ENCODE measurements at regions of chr9 and their contacts with region 1.

Region 1: GRCh38 chr9:133356391-133357091 is at the starts of genes SURF1 and SURF2:
- DNase-seq: peak; percentile 77 to 92 (median 87)
- ATAC-seq: peak; percentile 96
- H3K4me3 ChIP-seq: peak within 1 kb of the TSS; percentile 64
- H3K4me3 Mint-ChIP-seq: peak within 1 kb of the TSS; percentile 80 to 94 (median 89)
- H3K27ac ChIP-seq: peak within 1 kb of the TSS; percentile 91
- H3K27ac Mint-ChIP-seq: peak within 1 kb of the TSS; percentile 72 to 91 (median 84)
- H3K4me1 ChIP-seq: peaks cover 12 to 28% of the 10 kb centered on the region in 2 donors
- H3K4me1 Mint-ChIP-seq: peaks cover 20 to 42% (median 28%) of the 10 kb centered on the region in 7 donors
- H3K27me3 ChIP-seq: no peaks in the 10 kb centered on the region
- H3K27me3 Mint-ChIP-seq: no peaks in the 10 kb centered on the region
- total RNA-seq, gene SURF1: 40.5 to 53.5 (median 47.9) TPM
- total RNA-seq, gene SURF2: 15.0 to 23.5 (median 15.6) TPM

Region 2: GRCh38 chr9:133335878-133336811 is 20.4 kb before region 1 on chr9 and contains the start of gene SURF6:
- CTCF ChIA-PET with region 1: no interaction called
- POLR2A ChIA-PET with region 1: interaction called, 10 read pairs
- intact Hi-C with region 1: loop called (anchors 1 kb)
- DNase-seq: peak; percentile 90 to 96 (median 93)
- ATAC-seq: peak; percentile 98
- H3K4me3 ChIP-seq: peak within 1 kb of the TSS; percentile 92
- H3K4me3 Mint-ChIP-seq: peak within 1 kb of the TSS; percentile 93 to 98 (median 96)
- H3K27ac ChIP-seq: peak within 1 kb of the TSS; percentile 82
- H3K27ac Mint-ChIP-seq: peak within 1 kb of the TSS; percentile 90 to 96 (median 94)
- H3K4me1 ChIP-seq: peaks cover 21 to 31% of the 10 kb centered on the region in 2 donors
- H3K4me1 Mint-ChIP-seq: peaks cover 22 to 59% (median 38%) of the 10 kb centered on the region in 7 donors
- H3K27me3 ChIP-seq: no peaks in the 10 kb centered on the region
- H3K27me3 Mint-ChIP-seq: no peaks in the 10 kb centered on the region
- total RNA-seq, gene SURF6: 15.4 to 33.5 (median 23.4) TPM

Region 3: DNA sequence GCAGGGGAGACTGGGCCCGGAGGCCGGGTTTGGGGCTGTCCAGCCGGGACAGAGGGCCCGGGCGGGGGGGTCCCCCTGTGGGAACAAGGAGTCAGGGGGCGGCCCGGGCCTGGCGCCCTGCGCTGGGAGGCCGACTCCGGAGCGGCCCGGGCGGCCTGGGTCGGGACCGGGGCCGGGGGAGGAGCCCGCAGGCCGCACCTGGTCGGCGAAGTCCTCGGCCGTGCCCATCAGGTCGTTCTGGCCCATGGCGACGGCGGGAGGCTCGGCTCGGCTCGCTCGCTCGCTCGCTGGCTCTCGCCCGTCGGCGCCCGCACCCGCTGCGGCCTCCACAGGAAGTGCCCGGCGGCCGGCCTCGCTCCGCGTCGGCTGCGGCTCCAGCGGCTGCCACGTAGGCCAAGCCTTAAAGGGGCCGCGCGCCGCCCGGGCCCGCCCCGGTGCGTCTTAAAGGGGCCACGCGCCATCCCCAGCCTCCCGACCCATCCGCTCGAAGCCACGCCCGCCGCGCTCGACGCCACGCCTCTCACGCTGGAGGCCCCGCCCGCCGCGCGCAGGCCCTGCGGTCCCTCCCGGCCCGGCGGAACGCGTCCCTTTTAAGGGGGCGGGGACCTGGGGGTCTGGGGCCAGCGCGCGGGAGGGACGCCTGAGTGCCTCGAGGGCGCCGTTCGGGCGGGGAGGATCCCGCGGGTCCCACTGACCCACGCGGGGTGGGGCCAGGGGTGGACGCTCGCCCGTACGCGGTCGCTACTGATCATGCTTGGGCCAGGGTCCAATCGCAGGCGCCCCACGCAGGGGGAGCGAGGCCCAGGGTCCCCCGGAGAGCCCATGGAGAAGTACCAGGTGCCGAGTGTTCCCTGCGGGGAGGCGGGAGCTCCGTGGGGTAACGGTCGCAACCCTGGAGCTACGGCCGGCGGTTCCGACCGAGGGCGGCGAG is 19.4 kb after region 1 on chr9 and contains the starts of genes STKLD1 and SURF4:
- CTCF ChIA-PET with region 1: interaction called, 14 read pairs
- POLR2A ChIA-PET with region 1: interaction called, 185 read pairs
- intact Hi-C with region 1: loop called (anchors 1 kb)
- DNase-seq: peak; percentile 86 to 99 (median 93)
- ATAC-seq: peak; percentile 95
- H3K4me3 ChIP-seq: peak within 1 kb of the TSS; percentile 58
- H3K4me3 Mint-ChIP-seq: peak within 1 kb of the TSS; percentile 84 to 98 (median 92)
- H3K27ac ChIP-seq: peak within 1 kb of the TSS; percentile 98
- H3K27ac Mint-ChIP-seq: peak within 1 kb of the TSS; percentile 72 to 99 (median 96)
- H3K4me1 ChIP-seq: peaks cover 31 to 38% of the 10 kb centered on the region in 2 donors
- H3K4me1 Mint-ChIP-seq: peaks cover 26 to 47% (median 34%) of the 10 kb centered on the region in 7 donors
- H3K27me3 ChIP-seq: no peaks in the 10 kb centered on the region
- H3K27me3 Mint-ChIP-seq: peaks cover 0 to 4% (median 0%) of the 10 kb centered on the region in 5 donors
- total RNA-seq, gene STKLD1: 1.1 to 1.8 (median 1.5) TPM
- total RNA-seq, gene SURF4: 72.5 to 196 (median 75.1) TPM

Region 4: DNA sequence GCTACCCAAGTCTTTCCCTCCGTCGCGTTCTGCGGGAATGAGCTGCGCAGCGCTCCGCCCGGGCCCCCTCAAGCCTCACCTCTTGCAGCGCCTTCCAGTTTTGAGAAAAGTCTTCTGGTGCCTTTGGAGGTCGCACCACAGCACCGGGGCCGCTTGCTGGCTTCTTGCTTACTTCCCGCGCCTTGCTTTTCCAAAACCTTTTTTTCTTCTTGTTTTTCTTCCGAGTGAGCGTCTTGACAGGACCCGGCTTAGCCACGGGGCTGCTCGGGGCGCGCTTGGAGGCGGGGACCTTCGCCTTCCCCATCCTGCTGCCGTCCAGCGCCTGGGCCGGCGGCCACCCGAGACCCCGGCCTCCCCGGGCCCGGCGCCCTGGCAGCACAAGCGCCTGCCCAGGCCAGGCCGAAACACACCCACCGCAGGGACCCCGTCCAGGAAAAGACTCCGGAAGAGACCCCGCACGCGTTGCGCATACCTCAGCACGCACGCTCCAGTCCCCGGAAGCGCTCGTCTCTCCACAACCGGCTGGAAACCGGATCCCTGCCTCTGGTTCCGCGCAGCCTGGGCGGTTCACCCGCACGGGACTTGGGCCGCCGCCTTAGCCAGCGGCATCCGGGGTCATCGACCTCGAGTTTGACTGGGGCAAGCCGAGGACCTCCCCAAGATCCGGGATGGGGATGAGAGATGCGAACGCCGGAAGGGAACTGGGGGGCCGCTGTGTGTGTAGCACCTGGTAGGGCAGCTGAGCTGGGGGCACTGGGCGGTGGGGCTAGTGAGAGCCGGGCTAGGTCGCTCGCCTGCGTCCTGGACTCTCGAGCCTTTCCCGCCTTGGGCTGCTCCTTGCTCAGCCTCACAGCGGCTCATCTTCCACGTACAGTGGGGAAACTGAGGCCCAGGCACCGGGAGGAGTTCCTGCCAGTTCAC is 61.3 kb after region 1 on chr9 and contains the start of gene REXO4:
- CTCF ChIA-PET with region 1: no interaction called
- POLR2A ChIA-PET with region 1: no interaction called
- intact Hi-C with region 1: loop called in 1 of 2 experiments (anchors 1 kb)
- DNase-seq: peak; percentile 73 to 88 (median 84)
- ATAC-seq: peak; percentile 93
- H3K4me3 ChIP-seq: peak within 1 kb of the TSS; percentile 87
- H3K4me3 Mint-ChIP-seq: peak within 1 kb of the TSS; percentile 88 to 93 (median 91)
- H3K27ac ChIP-seq: peak within 1 kb of the TSS; percentile 80
- H3K27ac Mint-ChIP-seq: peak within 1 kb of the TSS; percentile 81 to 94 (median 91)
- H3K4me1 ChIP-seq: peaks cover 13 to 14% of the 10 kb centered on the region in 2 donors
- H3K4me1 Mint-ChIP-seq: peaks cover 32 to 60% (median 54%) of the 10 kb centered on the region in 7 donors
- H3K27me3 ChIP-seq: no peaks in the 10 kb centered on the region
- H3K27me3 Mint-ChIP-seq: peaks cover 0 to 3% (median 0%) of the 10 kb centered on the region in 5 donors
- total RNA-seq, gene REXO4: 17.8 to 44.1 (median 28.6) TPM

Region 5: GRCh38 chr9:133485361-133486260 is 129.1 kb after region 1 on chr9:
- CTCF ChIA-PET with region 1: no interaction called
- POLR2A ChIA-PET with region 1: interaction called, 4 read pairs
- intact Hi-C with region 1: loop called in 1 of 2 experiments (anchors 1 kb)
- DNase-seq: no peak
- ATAC-seq: no peak
- H3K4me3 ChIP-seq: no peak overlapping the region
- H3K4me3 Mint-ChIP-seq: peak overlapping the region in 3 of 10 donors; percentile 14 to 49 (median 35)
- H3K27ac ChIP-seq: no peak overlapping the region
- H3K27ac Mint-ChIP-seq: peak overlapping the region in 1 of 9 donors; percentile 50
- H3K4me1 ChIP-seq: peaks cover 3 to 5% of the 10 kb centered on the region in 2 donors
- H3K4me1 Mint-ChIP-seq: peaks cover 0 to 7% (median 6%) of the 10 kb centered on the region in 7 donors
- H3K27me3 ChIP-seq: no peaks in the 10 kb centered on the region
- H3K27me3 Mint-ChIP-seq: peaks cover 0 to 6% (median 0%) of the 10 kb centered on the region in 5 donors